ENCODE measurements at regions of chr10 and their contacts with region 1.

Region 1: DNA sequence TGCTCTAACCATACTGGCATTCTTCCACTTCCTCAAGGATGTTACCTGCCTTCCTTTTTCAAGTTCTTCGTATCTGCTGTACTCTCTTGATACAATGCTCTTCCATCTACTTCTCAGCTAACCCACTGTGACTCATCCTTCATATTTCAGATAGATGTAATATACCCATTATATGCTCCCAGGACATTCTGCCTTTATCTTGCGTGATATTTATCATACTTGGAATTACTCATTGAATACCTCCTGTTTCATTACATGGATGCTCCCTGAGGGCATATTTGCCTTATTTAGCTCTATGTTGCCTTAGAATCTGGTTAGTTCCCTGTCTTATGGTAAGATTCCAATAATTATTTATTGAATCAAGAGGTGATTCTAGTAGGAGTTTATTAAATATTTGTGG is 706.4 kb downstream of the SORCS3 start:
- DNase-seq: no peak
- H3K4me3 ChIP-seq: no peak overlapping the region
- CTCF ChIP-seq: no peak

Region 2: GRCh38 chr10:105247831-105248499 is 99.5 kb before region 1 on chr10:
- in situ Hi-C with region 1: loop called (anchors 5 kb)
- DNase-seq: no peak
- H3K4me3 ChIP-seq: no peak overlapping the region
- CTCF ChIP-seq: no peak

Region 3: GRCh38 chr10:105291571-105291970 is 55.9 kb before region 1 on chr10:
- in situ Hi-C with region 1: no loop called
- DNase-seq: no peak
- H3K4me3 ChIP-seq: no peak overlapping the region
- CTCF ChIP-seq: no peak

Region 4: DNA sequence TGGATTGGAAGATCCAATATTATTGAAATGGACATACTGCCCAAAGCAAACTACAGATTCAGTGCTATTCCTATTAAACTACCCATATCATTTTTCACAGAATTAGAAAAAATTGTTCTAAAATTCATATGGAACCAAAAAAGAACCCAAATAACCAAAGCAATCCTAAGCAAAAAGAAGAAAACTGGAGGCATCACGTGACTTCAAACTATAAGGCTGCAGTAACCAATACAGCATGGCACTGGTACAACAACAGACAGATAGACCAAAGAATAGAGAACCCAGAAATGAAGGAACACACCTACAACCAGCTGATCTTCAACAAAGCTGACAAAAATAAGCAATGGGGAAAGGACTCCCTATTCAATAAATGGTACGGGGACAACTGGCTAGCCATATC is 59.0 kb after region 1 on chr10:
- in situ Hi-C with region 1: no loop called
- DNase-seq: no peak
- H3K4me3 ChIP-seq: no peak overlapping the region
- CTCF ChIP-seq: no peak

Measured in astrocyte of the cerebellum (primary cell).